Common myeloid progenitor, CD34-positive (primary cell): ENCODE measurements at regions of chr6 and their contacts with region 1.

Region 1: GRCh38 chr6:30600451-30600961 is 16.5 kb downstream of the PPP1R10 start:
- DNase-seq: no peak
- H3K4me3 ChIP-seq: no peak overlapping the region
- H3K27ac ChIP-seq: no peak overlapping the region
- H3K4me1 ChIP-seq: peaks cover 0 to 7% (median under 1%) of the 10 kb centered on the region in 4 experiments
- H3K27me3 ChIP-seq: no peaks in the 10 kb centered on the region

Region 2: GRCh38 chr6:29502597-29502996 is 1097.9 kb before region 1 on chr6:
- CTCF ChIA-PET with region 1: no interaction called
- POLR2A ChIA-PET with region 1: no interaction called
- DNase-seq: peak in 1 of 3 donors; percentile 28
- H3K4me3 ChIP-seq: no peak overlapping the region
- H3K27ac ChIP-seq: no peak overlapping the region
- H3K4me1 ChIP-seq: peaks cover 0 to 2% (median 0%) of the 10 kb centered on the region in 4 experiments
- H3K27me3 ChIP-seq: no peaks in the 10 kb centered on the region

Region 3: DNA sequence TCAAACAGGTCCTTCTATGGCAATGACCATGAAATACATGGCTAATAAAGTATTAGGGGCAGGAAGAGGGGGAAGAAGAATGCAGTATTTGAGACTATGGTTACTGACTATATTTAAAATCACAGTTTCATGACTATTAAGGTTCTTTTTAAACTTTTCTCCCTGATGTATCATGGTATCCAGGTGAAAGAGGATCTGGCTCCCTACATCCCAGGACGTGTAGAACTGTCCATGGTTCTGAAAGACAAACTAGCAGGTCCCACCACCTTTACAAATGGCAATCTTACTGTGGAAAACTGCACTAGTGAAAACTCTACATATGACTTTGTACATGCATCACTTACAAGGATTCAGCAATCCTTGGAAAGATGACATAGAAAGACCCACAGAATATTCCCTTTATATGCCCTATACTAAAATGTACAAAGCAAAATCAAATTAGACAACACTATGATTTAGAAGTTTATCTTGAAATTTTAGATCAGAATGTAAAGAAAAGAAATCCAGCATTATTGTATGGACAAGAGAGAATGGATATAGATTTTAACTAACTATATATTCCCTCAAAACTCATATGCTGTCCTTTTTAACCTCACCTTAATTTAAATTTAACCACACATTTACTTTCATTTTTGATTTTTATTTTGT is 222.1 kb before region 1 on chr6:
- CTCF ChIA-PET with region 1: no interaction called
- POLR2A ChIA-PET with region 1: no interaction called
- DNase-seq: no peak
- H3K4me3 ChIP-seq: no peak overlapping the region
- H3K27ac ChIP-seq: no peak overlapping the region
- H3K4me1 ChIP-seq: no peaks in the 10 kb centered on the region
- H3K27me3 ChIP-seq: peaks cover 13 to 67% (median 35%) of the 10 kb centered on the region in 5 experiments

Region 4: GRCh38 chr6:30483677-30484279 is 116.7 kb before region 1 on chr6:
- CTCF ChIA-PET with region 1: interaction called, 99 read pairs
- POLR2A ChIA-PET with region 1: interaction called, 6 read pairs
- DNase-seq: peak; percentile 68 to 79 (median 71)
- H3K4me3 ChIP-seq: no peak overlapping the region
- H3K27ac ChIP-seq: no peak overlapping the region
- H3K4me1 ChIP-seq: peaks cover 7 to 28% (median 19%) of the 10 kb centered on the region in 4 experiments
- H3K27me3 ChIP-seq: peaks cover 4 to 42% (median 26%) of the 10 kb centered on the region in 5 experiments

Region 5: DNA sequence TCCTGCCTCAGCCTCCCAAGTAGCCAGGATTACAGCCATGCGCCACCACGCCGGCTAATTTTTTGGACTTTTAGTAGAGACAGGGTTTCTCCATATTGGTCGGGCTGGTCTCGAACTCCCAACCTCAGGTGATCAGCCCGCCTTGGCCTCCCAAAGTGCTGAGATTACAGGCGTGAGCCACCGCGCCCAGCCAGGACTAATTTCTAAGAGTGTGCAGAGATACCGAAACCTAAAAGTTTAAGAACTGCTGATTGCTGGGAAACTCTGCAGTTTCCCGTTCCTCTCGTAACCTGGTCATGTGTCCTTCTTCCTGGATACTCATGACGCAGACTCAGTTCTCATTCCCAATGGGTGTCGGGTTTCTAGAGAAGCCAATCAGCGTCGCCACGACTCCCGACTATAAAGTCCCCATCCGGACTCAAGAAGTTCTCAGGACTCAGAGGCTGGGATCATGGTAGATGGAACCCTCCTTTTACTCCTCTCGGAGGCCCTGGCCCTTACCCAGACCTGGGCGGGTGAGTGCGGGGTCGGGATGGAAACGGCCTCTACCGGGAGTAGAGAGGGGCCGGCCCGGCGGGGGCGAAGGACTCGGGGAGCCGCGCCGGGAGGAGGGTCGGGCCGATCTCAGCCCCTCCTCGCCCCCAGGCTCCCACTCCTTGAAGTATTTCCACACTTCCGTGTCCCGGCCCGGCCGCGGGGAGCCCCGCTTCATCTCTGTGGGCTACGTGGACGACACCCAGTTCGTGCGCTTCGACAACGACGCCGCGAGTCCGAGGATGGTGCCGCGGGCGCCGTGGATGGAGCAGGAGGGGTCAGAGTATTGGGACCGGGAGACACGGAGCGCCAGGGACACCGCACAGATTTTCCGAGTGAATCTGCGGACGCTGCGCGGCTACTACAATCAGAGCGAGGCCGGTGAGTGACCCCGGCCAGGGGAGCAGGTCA is 111.2 kb before region 1 on chr6 and contains the start of gene HLA-E:
- CTCF ChIA-PET with region 1: interaction called, 99 read pairs
- POLR2A ChIA-PET with region 1: no interaction called
- DNase-seq: peak; percentile 99 to 100 (median 100)
- H3K4me3 ChIP-seq: peak within 1 kb of the TSS; percentile 95 to 100 (median 98)
- H3K27ac ChIP-seq: peak within 1 kb of the TSS; percentile 89 to 93
- H3K4me1 ChIP-seq: peaks cover 10 to 41% (median 29%) of the 10 kb centered on the region in 4 experiments
- H3K27me3 ChIP-seq: no peaks in the 10 kb centered on the region

Region 6: GRCh38 chr6:30578051-30578450 is 22.5 kb before region 1 on chr6:
- CTCF ChIA-PET with region 1: interaction called, 23 read pairs
- POLR2A ChIA-PET with region 1: no interaction called
- DNase-seq: no peak
- H3K4me3 ChIP-seq: no peak overlapping the region
- H3K27ac ChIP-seq: no peak overlapping the region
- H3K4me1 ChIP-seq: peaks cover 0 to 11% (median 2%) of the 10 kb centered on the region in 4 experiments
- H3K27me3 ChIP-seq: no peaks in the 10 kb centered on the region

Region 7: GRCh38 chr6:30583921-30584320 is 16.6 kb before region 1 on chr6:
- CTCF ChIA-PET with region 1: interaction called, 23 read pairs
- POLR2A ChIA-PET with region 1: interaction called, 4 read pairs
- DNase-seq: no peak
- H3K4me3 ChIP-seq: no peak overlapping the region
- H3K27ac ChIP-seq: no peak overlapping the region
- H3K4me1 ChIP-seq: no peaks in the 10 kb centered on the region
- H3K27me3 ChIP-seq: no peaks in the 10 kb centered on the region

Region 8: GRCh38 chr6:30611150-30611855 is 10.8 kb after region 1 on chr6:
- CTCF ChIA-PET with region 1: interaction called, 53 read pairs
- POLR2A ChIA-PET with region 1: interaction called, 21 read pairs
- DNase-seq: no peak
- H3K4me3 ChIP-seq: no peak overlapping the region
- H3K27ac ChIP-seq: no peak overlapping the region
- H3K4me1 ChIP-seq: peaks cover 13 to 36% (median 19%) of the 10 kb centered on the region in 4 experiments
- H3K27me3 ChIP-seq: no peaks in the 10 kb centered on the region

Region 9: GRCh38 chr6:30616811-30617564 is 16.5 kb after region 1 on chr6 and contains the start of gene PPP1R10:
- CTCF ChIA-PET with region 1: interaction called, 53 read pairs
- POLR2A ChIA-PET with region 1: interaction called, 21 read pairs
- DNase-seq: peak; percentile 100
- H3K4me3 ChIP-seq: peak within 1 kb of the TSS; percentile 74 to 100 (median 100)
- H3K27ac ChIP-seq: peak within 1 kb of the TSS; percentile 100
- H3K4me1 ChIP-seq: peaks cover 18 to 42% (median 29%) of the 10 kb centered on the region in 4 experiments
- H3K27me3 ChIP-seq: no peaks in the 10 kb centered on the region

Region 10: GRCh38 chr6:30781743-30782424 is 181.4 kb after region 1 on chr6:
- CTCF ChIA-PET with region 1: no interaction called
- POLR2A ChIA-PET with region 1: no interaction called
- DNase-seq: peak; percentile 90 to 97 (median 90)
- H3K4me3 ChIP-seq: peak overlapping the region in 2 of 7 experiments; percentile 22 to 30
- H3K27ac ChIP-seq: peak overlapping the region in 1 of 2 experiments; percentile 78
- H3K4me1 ChIP-seq: peaks cover 6 to 55% (median 30%) of the 10 kb centered on the region in 4 experiments
- H3K27me3 ChIP-seq: peaks cover 0 to 63% (median 8%) of the 10 kb centered on the region in 5 experiments

Region 11: GRCh38 chr6:30963641-30964040 is 363.1 kb after region 1 on chr6:
- CTCF ChIA-PET with region 1: no interaction called
- POLR2A ChIA-PET with region 1: no interaction called
- DNase-seq: no peak
- H3K4me3 ChIP-seq: no peak overlapping the region
- H3K27ac ChIP-seq: no peak overlapping the region
- H3K4me1 ChIP-seq: no peaks in the 10 kb centered on the region
- H3K27me3 ChIP-seq: peaks cover 0 to 20% (median 14%) of the 10 kb centered on the region in 5 experiments